ENCODE measurements at regions of chr9 and their contacts with region 1.

Region 1: GRCh38 chr9:2655411-2655901 is 33.9 kb downstream of the VLDLR start:
- DNase-seq: peak; percentile 40
- H3K4me3 Mint-ChIP-seq: peak overlapping the region; percentile 13
- H3K27ac Mint-ChIP-seq: peak overlapping the region; percentile 91
- H3K4me1 Mint-ChIP-seq: peaks cover 29% of the 10 kb centered on the region
- H3K27me3 Mint-ChIP-seq: no peaks in the 10 kb centered on the region

Region 2: GRCh38 chr9:2241836-2242741 is 413.4 kb before region 1 on chr9:
- intact Hi-C with region 1: loop called (anchors 5 kb)
- DNase-seq: peak; percentile 63
- H3K4me3 Mint-ChIP-seq: peak overlapping the region; percentile 76
- H3K27ac Mint-ChIP-seq: no peak overlapping the region
- H3K4me1 Mint-ChIP-seq: peaks cover 11% of the 10 kb centered on the region
- H3K27me3 Mint-ChIP-seq: peaks cover 34% of the 10 kb centered on the region

Region 3: DNA sequence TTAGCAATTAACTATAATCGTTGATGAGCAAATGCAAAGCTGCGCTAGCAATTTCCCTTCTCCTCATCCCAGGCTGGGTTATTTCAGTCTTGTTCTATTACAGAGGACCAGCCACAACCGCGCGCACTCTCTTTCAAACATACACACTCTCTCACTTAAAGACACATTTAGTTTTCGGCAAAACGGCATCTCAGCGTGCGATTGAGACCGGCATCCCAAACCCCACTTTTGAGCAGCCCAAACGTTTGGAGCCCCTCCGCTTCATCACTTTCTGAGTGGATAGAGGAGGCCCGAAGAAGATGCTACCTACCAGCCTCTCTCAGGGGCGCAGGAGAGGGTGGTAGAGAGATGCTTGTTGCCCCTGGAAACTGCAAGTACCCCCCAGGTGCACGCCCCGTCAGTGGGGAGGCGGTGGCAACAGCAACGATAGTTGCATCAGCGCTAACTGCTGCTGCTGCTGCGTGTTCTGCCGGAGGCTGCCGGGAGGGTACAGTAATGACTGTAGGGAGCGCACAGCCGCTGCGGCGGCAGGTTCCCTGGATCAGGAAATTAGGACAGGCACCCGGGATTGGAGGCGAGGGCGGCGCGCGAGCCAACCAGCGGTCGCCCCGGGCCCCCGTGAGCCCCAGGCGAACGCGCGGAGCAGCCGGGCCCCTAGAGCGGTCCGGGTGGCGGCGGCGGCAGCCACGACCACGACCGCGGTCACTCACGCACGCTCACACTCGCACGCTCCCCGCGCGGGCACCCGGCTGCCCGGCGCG is 34.4 kb before region 1 on chr9:
- intact Hi-C with region 1: loop called (anchors 1 kb)
- DNase-seq: peak; percentile 47
- H3K4me3 Mint-ChIP-seq: peak overlapping the region; percentile 87
- H3K27ac Mint-ChIP-seq: peak overlapping the region; percentile 83
- H3K4me1 Mint-ChIP-seq: peaks cover 27% of the 10 kb centered on the region
- H3K27me3 Mint-ChIP-seq: peaks cover 30% of the 10 kb centered on the region

Region 4: DNA sequence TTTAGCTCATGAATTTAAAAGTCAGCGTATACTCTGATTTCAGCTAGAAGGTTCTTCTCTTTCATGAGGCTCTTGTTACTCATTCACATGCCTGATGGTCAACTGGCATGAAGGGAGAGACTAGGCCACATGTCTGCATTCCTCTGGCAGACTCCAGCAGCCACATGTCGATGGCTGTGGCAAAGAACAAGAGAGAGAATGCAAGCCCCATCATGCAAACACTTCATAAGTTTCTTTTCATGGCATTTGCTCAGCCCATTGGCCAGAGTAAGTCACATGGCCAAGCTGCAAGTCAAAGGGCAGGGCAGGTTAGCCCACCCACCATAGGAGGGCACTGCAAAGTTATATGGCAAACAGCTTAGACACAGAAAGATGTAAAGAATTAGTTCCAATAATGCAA is 67.3 kb after region 1 on chr9:
- intact Hi-C with region 1: loop called (anchors 5 kb)
- DNase-seq: no peak
- H3K4me3 Mint-ChIP-seq: no peak overlapping the region
- H3K27ac Mint-ChIP-seq: no peak overlapping the region
- H3K4me1 Mint-ChIP-seq: peaks cover 4% of the 10 kb centered on the region
- H3K27me3 Mint-ChIP-seq: no peaks in the 10 kb centered on the region

Region 5: GRCh38 chr9:2849941-2850340 is 194.5 kb after region 1 on chr9:
- intact Hi-C with region 1: loop called (anchors 10 kb)
- DNase-seq: no peak
- H3K4me3 Mint-ChIP-seq: no peak overlapping the region
- H3K27ac Mint-ChIP-seq: peak overlapping the region; percentile 18
- H3K4me1 Mint-ChIP-seq: peaks cover 12% of the 10 kb centered on the region
- H3K27me3 Mint-ChIP-seq: peaks cover 3% of the 10 kb centered on the region

Measured in activated T-helper 2 cell treated with anti-CD3 and anti-CD28 coated beads, Interferon-gamma antibody, Interleukin-2, Interleukin-4, amounts not matched to agents 10 μg/mL and 5 μg/mL and 100 μg/mL, durations not matched to agents 14 hours and 24 hours and 36 hours (primary cell).